ENCODE measurements at regions of chr12 and their contacts with region 1.

Region 1: GRCh38 chr12:98593351-98594049 is at the start of gene SLC25A3:
- DNase-seq: peak; percentile 92 to 96 (median 95)
- H3K4me3 ChIP-seq: peak within 1 kb of the TSS; percentile 71 to 79
- H3K4me3 Mint-ChIP-seq: peak within 1 kb of the TSS; percentile 90 to 98 (median 96)
- H3K27ac ChIP-seq: peak within 1 kb of the TSS; percentile 94
- H3K27ac Mint-ChIP-seq: peak within 1 kb of the TSS; percentile 91 to 99 (median 98)
- H3K4me1 ChIP-seq: peaks cover 34% of the 10 kb centered on the region
- H3K4me1 Mint-ChIP-seq: peaks cover 19 to 48% (median 31%) of the 10 kb centered on the region in 4 donors
- H3K27me3 ChIP-seq: no peaks in the 10 kb centered on the region
- H3K27me3 Mint-ChIP-seq: no peaks in the 10 kb centered on the region
- total RNA-seq, gene SLC25A3: 213 to 227 TPM

Region 2: DNA sequence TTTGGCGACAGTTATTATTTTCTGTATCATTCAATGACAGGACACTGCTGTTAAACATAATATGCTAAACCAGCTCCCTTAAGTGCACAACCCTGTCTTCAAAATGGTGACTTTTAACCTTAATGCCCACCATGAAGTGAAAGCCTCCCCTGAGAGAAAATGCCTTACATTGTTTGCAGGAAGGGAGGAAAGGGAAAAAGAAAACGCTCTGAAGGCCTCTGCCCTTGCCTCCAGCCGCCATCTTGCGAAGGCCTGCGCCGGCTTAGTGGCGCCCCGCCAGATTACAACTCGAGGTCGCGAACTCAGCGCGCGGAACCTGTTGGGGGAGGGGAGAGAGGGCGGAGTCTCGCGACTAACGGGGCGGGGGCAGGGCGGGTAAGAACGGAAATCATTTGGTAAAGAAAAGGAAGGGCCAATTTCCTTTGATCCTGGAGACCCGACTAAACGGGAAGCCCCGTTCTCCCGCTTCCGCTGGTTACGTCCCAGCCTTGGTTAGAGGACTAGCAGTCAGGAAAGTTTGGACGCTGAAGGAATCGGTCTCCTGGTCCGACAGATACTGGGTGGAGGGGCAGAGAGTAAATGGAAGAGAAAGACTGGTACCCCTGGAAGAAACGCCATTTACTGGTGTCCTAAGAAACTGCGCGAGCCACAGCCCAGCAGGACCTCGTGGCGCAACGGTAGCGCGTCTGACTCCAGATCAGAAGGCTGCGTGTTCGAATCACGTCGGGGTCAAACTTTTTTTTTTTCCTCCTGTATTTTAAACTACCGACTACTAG is 89.7 kb before region 1 on chr12:
- CTCF ChIA-PET with region 1: no interaction called
- POLR2A ChIA-PET with region 1: interaction called, 7 read pairs
- intact Hi-C with region 1: loop called (anchors 1 kb)
- DNase-seq: peak; percentile 90 to 94 (median 93)
- H3K4me3 ChIP-seq: peak overlapping the region; percentile 72 to 93
- H3K4me3 Mint-ChIP-seq: peak overlapping the region; percentile 95 to 99 (median 98)
- H3K27ac ChIP-seq: peak overlapping the region; percentile 85
- H3K27ac Mint-ChIP-seq: peak overlapping the region; percentile 98 to 100 (median 100)
- H3K4me1 ChIP-seq: peaks cover 16% of the 10 kb centered on the region
- H3K4me1 Mint-ChIP-seq: peaks cover 17 to 42% (median 29%) of the 10 kb centered on the region in 4 donors
- H3K27me3 ChIP-seq: no peaks in the 10 kb centered on the region
- H3K27me3 Mint-ChIP-seq: peaks cover 4 to 15% of the 10 kb centered on the region in 2 donors

Region 3: GRCh38 chr12:98572010-98572409 is 21.5 kb before region 1 on chr12:
- CTCF ChIA-PET with region 1: interaction called, 51 read pairs
- POLR2A ChIA-PET with region 1: interaction called, 17 read pairs
- intact Hi-C with region 1: loop called (anchors 2 kb)
- DNase-seq: no peak
- H3K4me3 ChIP-seq: no peak overlapping the region
- H3K4me3 Mint-ChIP-seq: no peak overlapping the region
- H3K27ac ChIP-seq: no peak overlapping the region
- H3K27ac Mint-ChIP-seq: no peak overlapping the region
- H3K4me1 ChIP-seq: no peaks in the 10 kb centered on the region
- H3K4me1 Mint-ChIP-seq: peaks cover 0 to 2% (median under 1%) of the 10 kb centered on the region in 4 donors
- H3K27me3 ChIP-seq: no peaks in the 10 kb centered on the region
- H3K27me3 Mint-ChIP-seq: peaks cover 0 to 2% of the 10 kb centered on the region in 2 donors

Region 4: DNA sequence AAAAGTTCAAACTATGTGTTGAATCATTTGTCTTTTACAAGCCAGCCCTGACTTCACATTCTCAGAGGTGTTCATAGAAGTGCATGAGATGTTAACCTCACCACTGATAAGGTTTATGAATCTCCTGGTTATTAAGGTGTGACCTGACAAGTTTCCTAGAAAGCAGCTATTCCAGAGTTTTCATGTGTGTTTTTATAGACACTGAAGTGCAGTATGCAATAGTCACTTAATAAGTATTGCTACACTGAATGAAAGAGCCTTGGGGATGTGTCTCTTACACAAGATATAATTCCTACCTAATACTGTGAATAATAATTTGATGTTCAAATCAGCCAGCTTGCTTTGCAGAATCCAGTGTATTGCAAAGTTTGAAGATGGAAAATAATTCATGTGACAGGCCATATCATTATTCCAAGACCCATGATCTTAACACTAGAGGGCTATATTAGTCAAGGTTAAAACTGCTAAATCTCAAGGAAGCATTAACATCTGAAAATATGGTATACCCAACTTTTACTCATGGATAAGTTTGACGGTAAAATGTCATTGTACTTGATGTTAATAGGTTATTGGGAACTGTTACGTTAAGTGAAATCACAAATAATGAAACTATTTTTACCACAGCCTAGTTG is 13.0 kb after region 1 on chr12:
- CTCF ChIA-PET with region 1: interaction called, 4 read pairs
- POLR2A ChIA-PET with region 1: interaction called, 13 read pairs
- intact Hi-C with region 1: no loop called
- DNase-seq: no peak
- H3K4me3 ChIP-seq: no peak overlapping the region
- H3K4me3 Mint-ChIP-seq: no peak overlapping the region
- H3K27ac ChIP-seq: no peak overlapping the region
- H3K27ac Mint-ChIP-seq: peak overlapping the region in 2 of 7 donors; percentile 5 to 9
- H3K4me1 ChIP-seq: no peaks in the 10 kb centered on the region
- H3K4me1 Mint-ChIP-seq: peaks cover 0 to 9% (median 1%) of the 10 kb centered on the region in 4 donors
- H3K27me3 ChIP-seq: no peaks in the 10 kb centered on the region
- H3K27me3 Mint-ChIP-seq: no peaks in the 10 kb centered on the region

Region 5: GRCh38 chr12:98639491-98639890 is 46.0 kb after region 1 on chr12:
- CTCF ChIA-PET with region 1: interaction called, 6 read pairs
- POLR2A ChIA-PET with region 1: interaction called, 74 read pairs
- intact Hi-C with region 1: no loop called
- DNase-seq: no peak
- H3K4me3 ChIP-seq: no peak overlapping the region
- H3K4me3 Mint-ChIP-seq: no peak overlapping the region
- H3K27ac ChIP-seq: no peak overlapping the region
- H3K27ac Mint-ChIP-seq: no peak overlapping the region
- H3K4me1 ChIP-seq: peaks cover 7% of the 10 kb centered on the region
- H3K4me1 Mint-ChIP-seq: peaks cover 3 to 12% (median 7%) of the 10 kb centered on the region in 4 donors
- H3K27me3 ChIP-seq: no peaks in the 10 kb centered on the region
- H3K27me3 Mint-ChIP-seq: no peaks in the 10 kb centered on the region

Region 6: DNA sequence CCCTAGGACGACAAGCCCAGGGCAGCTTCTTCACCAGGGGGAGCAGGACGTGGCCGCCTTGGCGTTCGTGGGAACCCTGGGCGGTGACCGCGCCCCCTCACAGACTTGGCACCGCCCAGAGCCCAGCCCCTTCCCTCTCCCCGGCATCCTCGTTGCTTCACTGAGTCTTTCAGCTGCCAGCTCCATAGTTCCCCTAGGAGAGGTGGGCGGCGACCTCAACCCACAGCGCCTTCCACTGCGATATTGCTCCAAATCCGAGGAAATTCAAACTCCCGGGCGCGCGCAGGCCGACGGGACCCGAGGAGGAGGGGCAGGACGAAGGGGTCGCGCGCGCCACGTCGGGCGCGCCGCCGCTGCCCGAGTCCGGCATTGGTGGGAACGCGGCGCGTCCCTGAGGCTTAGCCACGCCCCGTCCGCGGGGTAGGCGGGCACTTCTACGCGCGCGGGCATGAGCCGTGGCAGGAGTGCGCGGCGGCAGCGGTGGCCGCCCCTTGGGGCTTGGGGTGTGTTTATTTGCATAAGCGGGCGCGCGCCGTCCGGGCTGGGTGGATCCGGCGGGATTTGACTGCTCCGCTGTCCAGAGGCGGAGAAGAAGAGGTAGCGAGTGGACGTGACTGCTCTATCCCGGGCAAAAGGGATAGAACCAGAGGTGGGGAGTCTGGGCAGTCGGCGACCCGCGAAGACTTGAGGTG is 51.4 kb after region 1 on chr12 and contains the starts of genes APAF1 and IKBIP:
- CTCF ChIA-PET with region 1: interaction called, 8 read pairs
- POLR2A ChIA-PET with region 1: interaction called, 74 read pairs
- intact Hi-C with region 1: loop called (anchors 1 kb)
- DNase-seq: peak; percentile 94 to 98 (median 96)
- H3K4me3 ChIP-seq: peak within 1 kb of the TSS; percentile 92 to 93
- H3K4me3 Mint-ChIP-seq: peak within 1 kb of the TSS; percentile 97 to 99 (median 98)
- H3K27ac ChIP-seq: peak within 1 kb of the TSS; percentile 73
- H3K27ac Mint-ChIP-seq: peak within 1 kb of the TSS; percentile 82 to 97 (median 96)
- H3K4me1 ChIP-seq: peaks cover 24% of the 10 kb centered on the region
- H3K4me1 Mint-ChIP-seq: peaks cover 14 to 40% (median 20%) of the 10 kb centered on the region in 4 donors
- H3K27me3 ChIP-seq: no peaks in the 10 kb centered on the region
- H3K27me3 Mint-ChIP-seq: no peaks in the 10 kb centered on the region
- total RNA-seq, gene APAF1: 30.8 to 32.2 TPM
- total RNA-seq, gene IKBIP: 7.7 to 8.2 TPM

Region 7: GRCh38 chr12:100266835-100267618 is 1673.5 kb after region 1 on chr12 and contains the starts of genes DEPDC4 and SCYL2:
- CTCF ChIA-PET with region 1: no interaction called
- POLR2A ChIA-PET with region 1: interaction called, 4 read pairs
- intact Hi-C with region 1: loop called (anchors 5 kb)
- DNase-seq: peak; percentile 93 to 98 (median 96)
- H3K4me3 ChIP-seq: peak within 1 kb of the TSS; percentile 26 to 90
- H3K4me3 Mint-ChIP-seq: peak within 1 kb of the TSS; percentile 97 to 100 (median 99)
- H3K27ac ChIP-seq: peak within 1 kb of the TSS; percentile 95
- H3K27ac Mint-ChIP-seq: peak within 1 kb of the TSS; percentile 95 to 100 (median 99)
- H3K4me1 ChIP-seq: peaks cover 46% of the 10 kb centered on the region
- H3K4me1 Mint-ChIP-seq: peaks cover 19 to 44% (median 32%) of the 10 kb centered on the region in 4 donors
- H3K27me3 ChIP-seq: no peaks in the 10 kb centered on the region
- H3K27me3 Mint-ChIP-seq: no peaks in the 10 kb centered on the region
- total RNA-seq, gene DEPDC4: 0.38 to 1.4 TPM
- total RNA-seq, gene SCYL2: 47.8 to 52.5 TPM